ENCODE measurements at regions of chr12 and their contacts with region 1.

Region 1: DNA sequence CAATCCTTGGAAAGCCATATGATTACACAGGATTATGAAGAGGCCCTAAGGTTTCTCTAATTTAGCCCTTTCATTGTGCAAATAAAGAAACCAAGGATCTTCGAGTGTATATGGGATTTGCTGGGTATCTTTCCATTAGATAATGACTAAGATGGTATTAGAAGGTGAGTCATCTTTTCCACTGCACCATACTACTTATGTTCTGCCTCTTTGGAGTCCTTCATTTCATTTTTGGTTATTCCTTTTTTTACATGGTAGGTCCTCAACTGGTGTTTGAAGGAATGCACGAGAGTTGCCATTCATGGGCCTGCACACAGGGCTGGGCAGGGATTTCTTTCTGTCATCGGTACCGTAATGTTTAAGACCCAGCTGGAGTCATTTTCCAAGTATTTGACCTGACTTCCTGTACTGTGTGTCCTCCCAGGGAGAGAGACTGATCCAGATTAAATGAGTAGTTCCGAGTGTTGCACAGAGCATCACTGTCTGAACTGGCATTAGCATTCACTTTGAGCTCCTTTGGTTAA is 85.7 kb downstream of the BORCS5 start:
- DNase-seq: no peak
- ATAC-seq: peak; percentile 24
- H3K4me3 Mint-ChIP-seq: peak overlapping the region; percentile 26
- H3K27ac Mint-ChIP-seq: peak overlapping the region; percentile 91
- H3K4me1 Mint-ChIP-seq: peaks cover 63% of the 10 kb centered on the region
- H3K27me3 Mint-ChIP-seq: no peaks in the 10 kb centered on the region

Region 2: GRCh38 chr12:12356886-12357718 is 85.5 kb before region 1 on chr12 and contains the start of gene BORCS5:
- CTCF ChIA-PET with region 1: interaction called, 3 read pairs
- POLR2A ChIA-PET with region 1: interaction called, 13 read pairs
- DNase-seq: peak; percentile 99
- ATAC-seq: peak; percentile 94
- H3K4me3 Mint-ChIP-seq: peak within 1 kb of the TSS; percentile 88
- H3K27ac Mint-ChIP-seq: peak within 1 kb of the TSS; percentile 94
- H3K4me1 Mint-ChIP-seq: peaks cover 48% of the 10 kb centered on the region
- H3K27me3 Mint-ChIP-seq: no peaks in the 10 kb centered on the region
- total RNA-seq, gene BORCS5: 18.8 to 21.2 TPM

Region 3: DNA sequence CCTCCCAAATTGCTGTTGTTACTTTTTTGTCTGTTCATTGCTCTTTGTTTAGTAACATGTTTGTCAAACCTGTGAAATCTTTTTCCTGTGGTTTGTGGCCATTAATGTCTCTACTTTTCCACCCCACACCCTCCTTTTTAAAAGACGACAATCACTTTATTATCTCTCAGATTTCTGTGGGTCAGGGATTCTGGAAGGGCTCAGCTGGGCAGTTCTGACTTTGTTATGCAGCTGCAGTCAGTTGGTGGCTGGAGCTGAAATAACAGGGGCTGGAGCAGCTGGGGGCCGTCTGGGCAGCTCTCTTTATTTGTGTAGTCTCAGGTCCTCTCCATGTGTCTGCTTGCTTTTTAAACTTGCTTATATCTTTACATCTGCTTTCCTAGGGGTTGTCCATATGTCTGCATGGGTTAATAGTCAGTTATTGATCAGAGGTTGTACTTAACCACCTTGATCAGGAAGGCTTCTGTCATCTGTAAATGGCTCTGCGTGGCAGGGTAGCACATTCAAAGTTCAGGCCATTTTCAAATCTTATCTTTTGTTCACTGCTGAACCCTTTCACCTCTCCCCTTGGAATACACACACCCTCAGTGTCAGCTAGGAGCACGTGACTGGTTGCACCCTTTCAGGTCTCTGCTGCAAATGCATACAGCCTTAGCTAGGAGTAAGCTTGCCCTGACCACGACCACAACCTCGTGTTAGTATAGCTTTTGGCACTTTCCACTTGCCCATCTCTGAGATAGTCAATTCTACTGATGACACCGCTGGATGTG is 57.9 kb before region 1 on chr12:
- CTCF ChIA-PET with region 1: interaction called, 5 read pairs
- POLR2A ChIA-PET with region 1: interaction called, 25 read pairs
- DNase-seq: peak; percentile 84
- ATAC-seq: peak; percentile 91
- H3K4me3 Mint-ChIP-seq: peak overlapping the region; percentile 38
- H3K27ac Mint-ChIP-seq: peak overlapping the region; percentile 87
- H3K4me1 Mint-ChIP-seq: peaks cover 55% of the 10 kb centered on the region
- H3K27me3 Mint-ChIP-seq: no peaks in the 10 kb centered on the region

Region 4: GRCh38 chr12:12456637-12457036 is 14.0 kb after region 1 on chr12:
- CTCF ChIA-PET with region 1: interaction called, 24 read pairs
- POLR2A ChIA-PET with region 1: interaction called, 23 read pairs
- DNase-seq: no peak
- ATAC-seq: peak; percentile 33
- H3K4me3 Mint-ChIP-seq: no peak overlapping the region
- H3K27ac Mint-ChIP-seq: peak overlapping the region; percentile 58
- H3K4me1 Mint-ChIP-seq: peaks cover 24% of the 10 kb centered on the region
- H3K27me3 Mint-ChIP-seq: no peaks in the 10 kb centered on the region

Region 5: GRCh38 chr12:12467688-12468261 is 25.2 kb after region 1 on chr12:
- CTCF ChIA-PET with region 1: interaction called, 31 read pairs
- POLR2A ChIA-PET with region 1: interaction called, 63 read pairs
- DNase-seq: no peak
- ATAC-seq: peak; percentile 48
- H3K4me3 Mint-ChIP-seq: no peak overlapping the region
- H3K27ac Mint-ChIP-seq: peak overlapping the region; percentile 31
- H3K4me1 Mint-ChIP-seq: peaks cover 64% of the 10 kb centered on the region
- H3K27me3 Mint-ChIP-seq: no peaks in the 10 kb centered on the region

Region 6: GRCh38 chr12:12486661-12487240 is 44.1 kb after region 1 on chr12:
- CTCF ChIA-PET with region 1: interaction called, 3 read pairs
- POLR2A ChIA-PET with region 1: interaction called, 12 read pairs
- DNase-seq: no peak
- ATAC-seq: no peak
- H3K4me3 Mint-ChIP-seq: no peak overlapping the region
- H3K27ac Mint-ChIP-seq: no peak overlapping the region
- H3K4me1 Mint-ChIP-seq: peaks cover 39% of the 10 kb centered on the region
- H3K27me3 Mint-ChIP-seq: no peaks in the 10 kb centered on the region

Region 7: DNA sequence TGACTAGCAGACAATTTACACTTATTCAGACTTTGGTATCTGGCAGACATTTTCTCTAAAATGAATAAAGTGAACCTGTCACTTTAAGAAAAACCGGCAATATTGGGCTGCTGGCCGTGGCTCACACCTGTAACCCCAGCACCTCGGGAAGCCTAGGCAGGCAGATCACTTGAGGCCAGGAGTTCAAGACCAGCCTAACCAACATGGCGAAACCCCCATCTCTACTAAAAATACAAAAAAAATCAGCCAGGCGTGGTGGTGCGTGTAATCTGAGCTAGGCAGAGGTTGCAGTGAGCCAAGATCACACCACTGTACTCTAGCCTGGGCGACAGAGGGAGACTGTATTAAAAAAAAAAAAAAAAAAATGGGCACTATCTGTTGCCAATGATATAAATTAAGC is 108.5 kb after region 1 on chr12:
- CTCF ChIA-PET with region 1: no interaction called
- POLR2A ChIA-PET with region 1: no interaction called
- DNase-seq: no peak
- ATAC-seq: no peak
- H3K4me3 Mint-ChIP-seq: no peak overlapping the region
- H3K27ac Mint-ChIP-seq: no peak overlapping the region
- H3K4me1 Mint-ChIP-seq: peaks cover 3% of the 10 kb centered on the region
- H3K27me3 Mint-ChIP-seq: no peaks in the 10 kb centered on the region

Region 8: DNA sequence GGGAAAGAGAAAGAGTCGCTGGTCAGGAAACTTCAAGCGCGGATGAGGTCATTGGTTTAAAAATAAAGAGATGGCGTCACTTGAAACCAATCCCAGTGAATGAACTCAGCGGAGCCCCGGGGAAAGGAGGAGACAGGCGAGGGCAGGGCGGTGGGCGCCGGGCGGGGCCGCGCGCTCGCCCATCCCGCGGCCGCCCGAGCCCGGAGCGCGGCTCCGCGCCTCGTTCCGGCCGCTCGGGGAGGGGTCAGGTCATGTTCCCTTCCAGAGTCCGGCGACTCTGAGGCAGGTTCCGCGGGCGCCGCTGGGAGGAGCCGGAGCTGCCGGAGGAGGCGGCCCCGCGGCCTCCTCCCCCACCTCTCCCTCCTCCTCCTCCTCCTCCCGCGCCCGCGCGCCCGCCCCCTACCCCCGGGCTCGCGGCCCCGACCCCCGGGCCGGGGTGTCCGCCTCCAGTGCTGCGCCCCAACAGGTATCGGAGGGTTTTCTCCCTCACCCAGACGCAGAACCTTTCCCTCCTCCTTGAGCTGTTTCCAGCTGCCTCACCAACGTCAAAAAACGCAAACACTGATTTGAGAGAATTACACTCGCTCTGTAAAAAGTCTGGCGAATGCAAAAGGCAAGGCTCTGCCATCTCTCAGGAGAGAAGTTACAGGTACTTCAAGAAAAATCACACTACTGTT is 120.1 kb after region 1 on chr12 and contains the start of gene DUSP16:
- CTCF ChIA-PET with region 1: interaction called, 10 read pairs
- POLR2A ChIA-PET with region 1: interaction called, 9 read pairs
- DNase-seq: peak; percentile 88
- ATAC-seq: peak; percentile 88
- H3K4me3 Mint-ChIP-seq: peak within 1 kb of the TSS; percentile 83
- H3K27ac Mint-ChIP-seq: peak within 1 kb of the TSS; percentile 91
- H3K4me1 Mint-ChIP-seq: peaks cover 35% of the 10 kb centered on the region
- H3K27me3 Mint-ChIP-seq: peaks cover 5% of the 10 kb centered on the region
- total RNA-seq, gene DUSP16: 17.4 to 19.0 TPM

Region 9: GRCh38 chr12:12673296-12673695 is 230.7 kb after region 1 on chr12:
- CTCF ChIA-PET with region 1: no interaction called
- POLR2A ChIA-PET with region 1: no interaction called
- DNase-seq: no peak
- ATAC-seq: peak; percentile 57
- H3K4me3 Mint-ChIP-seq: no peak overlapping the region
- H3K27ac Mint-ChIP-seq: no peak overlapping the region
- H3K4me1 Mint-ChIP-seq: peaks cover 25% of the 10 kb centered on the region
- H3K27me3 Mint-ChIP-seq: no peaks in the 10 kb centered on the region